ENCODE measurements at regions of chr7 and their contacts with region 1.

Region 1: DNA sequence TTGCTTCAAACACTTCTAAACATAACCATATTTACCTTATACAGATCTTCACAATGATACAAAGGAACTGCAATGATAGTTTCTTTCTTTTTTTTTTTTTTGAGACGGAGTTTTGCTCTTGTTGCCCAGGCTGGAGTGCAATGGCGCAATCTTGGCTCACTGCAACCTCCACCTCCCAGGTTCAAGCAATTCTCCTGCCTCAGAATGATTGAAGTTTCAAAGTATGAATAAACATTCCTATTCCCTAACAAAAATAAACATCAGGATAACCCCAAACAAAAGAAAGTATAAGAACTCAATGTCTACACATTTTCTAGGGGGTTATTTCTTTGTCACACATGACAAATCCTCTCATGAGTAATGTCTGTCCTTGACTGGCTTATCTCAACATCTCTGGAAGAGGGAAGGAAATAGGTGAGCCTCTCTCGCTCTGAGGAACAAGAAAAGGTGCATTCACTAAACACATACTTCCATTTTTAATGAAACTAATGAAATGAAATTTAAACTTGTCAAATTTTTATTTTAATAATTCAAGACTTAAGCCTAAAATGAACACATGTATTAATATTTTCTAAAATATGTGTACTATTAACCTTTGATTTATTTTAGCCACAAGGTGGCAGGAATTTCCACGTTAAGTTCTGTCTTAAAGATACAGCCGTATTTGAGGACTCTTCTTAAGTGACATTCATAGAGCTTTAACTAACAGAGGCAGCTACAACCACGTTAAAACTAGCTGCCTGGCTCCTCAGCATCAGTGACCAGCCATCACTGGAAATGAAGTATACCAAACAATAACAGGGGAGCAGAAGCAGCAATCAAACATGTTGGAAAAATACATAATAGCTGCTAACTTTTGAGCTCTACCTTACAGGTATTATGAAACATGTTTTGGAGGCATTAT is 58.3 kb downstream of the MALSU1 start:
- DNase-seq: no peak
- H3K4me3 Mint-ChIP-seq: peak overlapping the region; percentile 49
- H3K27ac Mint-ChIP-seq: peak overlapping the region; percentile 49
- H3K4me1 Mint-ChIP-seq: peaks cover 26% of the 10 kb centered on the region
- H3K27me3 Mint-ChIP-seq: peaks cover 48% of the 10 kb centered on the region

Region 2: DNA sequence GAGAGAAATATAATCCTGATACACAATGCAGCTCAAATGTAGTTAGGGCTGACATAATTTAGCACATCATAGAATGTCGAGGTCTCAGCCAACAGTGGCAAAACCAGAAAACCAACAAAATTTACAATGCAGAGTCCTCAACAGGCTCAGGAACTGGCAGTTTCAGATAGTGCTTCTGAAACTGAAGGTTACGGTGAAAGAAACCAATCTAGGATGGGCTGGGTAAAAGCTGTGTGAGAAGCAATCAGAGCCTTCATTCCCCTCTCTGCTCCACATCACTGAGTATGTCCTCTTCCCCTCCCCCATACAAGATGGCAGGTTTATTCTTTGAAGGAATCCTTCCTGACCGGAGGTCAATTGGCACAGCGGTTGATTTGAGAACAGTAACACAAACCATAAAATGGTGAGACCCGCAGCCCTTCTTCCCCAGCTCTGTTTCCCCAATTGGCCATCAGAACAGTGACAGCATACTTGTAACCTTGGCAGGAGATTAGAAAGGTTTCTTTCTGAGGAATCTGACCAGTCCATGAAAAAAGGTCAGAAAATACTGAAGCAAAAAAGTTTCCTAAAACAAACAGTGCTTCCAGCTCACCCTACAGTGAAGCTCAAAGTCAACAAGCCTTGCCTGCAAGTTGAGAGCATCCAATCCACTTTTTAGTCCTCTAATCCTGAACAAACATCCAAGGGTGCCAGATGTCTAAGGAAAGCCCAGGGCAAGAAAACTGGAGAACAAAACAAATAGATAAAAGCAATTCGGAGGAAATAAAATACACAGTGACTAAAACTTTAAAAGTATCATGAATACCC is 684.4 kb before region 1 on chr7:
- intact Hi-C with region 1: loop called (anchors 10 kb)
- DNase-seq: no peak
- H3K4me3 Mint-ChIP-seq: peak overlapping the region; percentile 6
- H3K27ac Mint-ChIP-seq: no peak overlapping the region
- H3K4me1 Mint-ChIP-seq: peaks cover 66% of the 10 kb centered on the region
- H3K27me3 Mint-ChIP-seq: peaks cover 3% of the 10 kb centered on the region

Region 3: GRCh38 chr7:23298885-23299769 is 58.3 kb before region 1 on chr7 and contains the start of gene MALSU1:
- intact Hi-C with region 1: loop called (anchors 1 kb)
- DNase-seq: peak; percentile 93
- H3K4me3 Mint-ChIP-seq: peak within 1 kb of the TSS; percentile 88
- H3K27ac Mint-ChIP-seq: peak within 1 kb of the TSS; percentile 88
- H3K4me1 Mint-ChIP-seq: peaks cover 38% of the 10 kb centered on the region
- H3K27me3 Mint-ChIP-seq: peaks cover 4% of the 10 kb centered on the region
- total RNA-seq, gene MALSU1: 92.3 and 92.8 TPM in 2 replicates

Region 4: DNA sequence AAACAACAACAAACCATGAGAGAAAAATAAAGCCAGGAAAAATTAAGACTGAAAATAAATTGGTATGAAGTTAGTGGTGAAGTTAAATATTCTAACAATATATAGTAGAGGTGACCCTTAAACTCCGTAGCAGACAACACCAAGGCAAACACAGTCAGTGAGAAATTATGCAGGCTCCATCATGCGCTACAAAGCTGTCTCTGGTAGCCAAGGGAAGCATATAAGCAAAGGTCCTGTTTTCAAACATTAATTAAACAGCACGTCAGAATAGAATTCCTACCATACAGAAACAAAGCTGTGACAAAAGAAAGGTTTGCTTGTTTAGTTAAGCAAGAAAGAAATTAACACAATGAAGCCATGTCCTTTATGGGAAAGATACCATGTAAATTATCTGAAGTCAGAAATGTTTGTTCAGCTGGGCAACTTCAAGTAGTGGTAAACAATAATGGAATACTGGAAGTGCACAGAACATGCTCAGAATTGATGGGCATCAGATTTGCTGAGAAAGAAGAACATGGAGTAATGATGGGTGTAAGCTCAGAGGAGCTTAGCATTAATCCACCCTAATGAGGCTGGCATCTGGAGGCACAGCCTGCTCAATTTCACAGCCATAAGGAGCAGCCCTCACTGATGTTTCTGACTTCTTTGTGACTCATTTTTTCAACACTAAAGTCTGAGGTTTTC is 37.2 kb after region 1 on chr7:
- intact Hi-C with region 1: loop called (anchors 1 kb)
- DNase-seq: no peak
- H3K4me3 Mint-ChIP-seq: no peak overlapping the region
- H3K27ac Mint-ChIP-seq: no peak overlapping the region
- H3K4me1 Mint-ChIP-seq: peaks cover 9% of the 10 kb centered on the region
- H3K27me3 Mint-ChIP-seq: peaks cover 5% of the 10 kb centered on the region

Region 5: GRCh38 chr7:23462846-23463245 is 105.4 kb after region 1 on chr7:
- intact Hi-C with region 1: loop called (anchors 2 kb)
- DNase-seq: no peak
- H3K4me3 Mint-ChIP-seq: no peak overlapping the region
- H3K27ac Mint-ChIP-seq: no peak overlapping the region
- H3K4me1 Mint-ChIP-seq: peaks cover 19% of the 10 kb centered on the region
- H3K27me3 Mint-ChIP-seq: peaks cover 75% of the 10 kb centered on the region

Region 6: DNA sequence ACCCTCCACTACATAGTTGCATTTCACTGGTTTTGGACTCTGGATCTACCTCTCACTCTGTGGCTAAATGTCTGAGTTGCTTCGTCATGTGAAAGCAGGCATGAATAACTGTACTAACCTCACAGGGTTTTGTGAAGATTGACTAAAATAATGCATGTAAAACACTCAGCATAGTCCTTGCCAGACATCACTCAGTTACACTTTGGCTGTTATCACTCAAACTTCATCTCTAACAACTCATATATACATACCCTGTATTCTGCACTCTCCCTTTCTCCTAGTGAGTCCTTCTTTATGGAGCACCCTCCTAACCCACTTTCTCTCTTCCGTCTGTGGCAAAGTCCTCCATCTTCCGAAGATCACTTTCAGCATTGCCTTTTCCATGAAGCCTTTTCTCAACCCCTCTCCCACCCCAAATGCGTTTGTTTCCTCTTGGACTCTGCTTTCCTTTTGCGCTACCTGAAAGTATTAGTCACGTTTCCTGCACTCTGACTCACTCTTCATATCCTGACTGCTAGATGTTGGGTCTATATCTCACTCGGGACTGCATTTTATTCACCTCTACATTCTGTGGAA is 1550.0 kb after region 1 on chr7:
- intact Hi-C with region 1: loop called (anchors 2 kb)
- DNase-seq: peak; percentile 38
- H3K4me3 Mint-ChIP-seq: no peak overlapping the region
- H3K27ac Mint-ChIP-seq: no peak overlapping the region
- H3K4me1 Mint-ChIP-seq: peaks cover 48% of the 10 kb centered on the region
- H3K27me3 Mint-ChIP-seq: no peaks in the 10 kb centered on the region

Measured in activated T-helper 1 cell treated with anti-CD3 and anti-CD28 coated beads, Interleukin-12 subunit alpha, Interleukin-12 subunit beta, Interleukin-2, Interleukin-4 antibody, amounts not matched to agents 30 ng/mL and 10 ng/mL and 1 ng/mL, durations not matched to agents 14 hours and 24 hours and 36 hours (primary cell).